ENCODE measurements at regions of chr1 and their contacts with region 1.

Region 1: GRCh38 chr1:213015099-213016050 is at the start of gene ANGEL2:
- DNase-seq: peak; percentile 90 to 99 (median 95)
- ATAC-seq: peak; percentile 97
- H3K4me3 ChIP-seq: peak within 1 kb of the TSS; percentile 90 to 96
- H3K4me3 Mint-ChIP-seq: peak within 1 kb of the TSS; percentile 100
- H3K27ac ChIP-seq: peak within 1 kb of the TSS; percentile 90 to 92
- H3K27ac Mint-ChIP-seq: peak within 1 kb of the TSS; percentile 100
- H3K4me1 ChIP-seq: peaks cover 19% of the 10 kb centered on the region
- H3K4me1 Mint-ChIP-seq: peaks cover 40% of the 10 kb centered on the region
- H3K27me3 ChIP-seq: no peaks in the 10 kb centered on the region
- H3K27me3 Mint-ChIP-seq: no peaks in the 10 kb centered on the region
- CTCF ChIP-seq: no peak
- total RNA-seq, gene ANGEL2: 47.4 to 52.5 TPM

Region 2: DNA sequence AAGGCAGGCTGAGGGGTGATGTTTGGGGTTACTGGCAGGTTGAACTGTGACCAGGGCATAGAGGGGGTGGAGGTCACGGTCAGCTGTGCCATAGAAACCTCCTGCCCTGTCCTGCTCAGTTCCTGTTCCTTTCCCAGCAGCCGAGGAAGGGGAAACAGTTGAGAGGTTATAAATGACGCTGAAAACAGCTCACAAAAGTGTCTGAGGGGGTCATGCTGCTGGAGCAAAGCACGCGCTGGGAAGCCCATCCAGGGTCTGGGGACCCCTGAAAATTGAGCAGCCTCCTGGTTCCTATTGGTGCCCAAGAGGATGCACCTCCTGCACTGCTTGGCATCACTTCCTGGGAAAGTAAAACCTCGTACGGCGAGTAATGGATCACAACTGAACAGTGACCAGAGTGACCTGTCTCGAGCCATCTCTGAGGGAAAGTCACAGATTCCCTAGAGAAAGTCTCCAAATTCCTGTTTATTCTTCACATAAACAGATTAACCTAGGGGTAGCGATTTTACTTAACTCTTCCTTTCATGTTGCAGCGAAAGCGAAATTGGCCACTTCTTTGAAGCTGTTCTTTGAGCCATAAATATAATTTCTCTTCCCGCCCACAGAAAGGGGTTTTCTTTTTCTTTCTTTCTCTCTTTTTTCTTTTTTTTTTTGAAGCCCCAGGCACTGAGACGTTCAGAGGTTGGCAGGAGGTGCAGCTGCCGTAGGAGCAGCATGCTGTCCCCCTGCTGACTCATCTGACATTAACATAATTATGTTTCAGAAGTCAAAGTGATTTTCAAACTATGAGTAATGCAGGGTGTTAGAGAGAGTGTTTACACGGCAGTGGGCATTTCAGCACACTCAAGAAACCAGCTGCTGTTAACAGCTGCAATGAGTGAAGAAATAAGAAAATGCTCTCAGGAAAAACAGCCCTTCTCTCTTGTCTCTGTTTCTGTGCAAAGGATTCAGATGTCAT is 448.6 kb before region 1 on chr1:
- CTCF ChIA-PET with region 1: no interaction called
- POLR2A ChIA-PET with region 1: no interaction called
- intact Hi-C with region 1: loop called (anchors 1 to 5 kb)
- DNase-seq: peak in 8 of 9 experiments; percentile 32 to 79 (median 59)
- ATAC-seq: peak; percentile 99
- H3K4me3 ChIP-seq: peak overlapping the region; percentile 59 to 67
- H3K4me3 Mint-ChIP-seq: peak overlapping the region; percentile 86
- H3K27ac ChIP-seq: peak overlapping the region; percentile 30 to 38
- H3K27ac Mint-ChIP-seq: peak overlapping the region; percentile 62
- H3K4me1 ChIP-seq: peaks cover 7% of the 10 kb centered on the region
- H3K4me1 Mint-ChIP-seq: peaks cover 16% of the 10 kb centered on the region
- H3K27me3 ChIP-seq: no peaks in the 10 kb centered on the region
- H3K27me3 Mint-ChIP-seq: no peaks in the 10 kb centered on the region
- CTCF ChIP-seq: no peak

Region 3: GRCh38 chr1:213051127-213051880 is 35.9 kb after region 1 on chr1 and contains the start of gene RPS6KC1:
- CTCF ChIA-PET with region 1: interaction called, 3 read pairs
- POLR2A ChIA-PET with region 1: interaction called, 4 read pairs
- intact Hi-C with region 1: loop called (anchors 1 kb)
- DNase-seq: peak; percentile 53 to 90 (median 85)
- ATAC-seq: peak; percentile 94
- H3K4me3 ChIP-seq: peak within 1 kb of the TSS; percentile 95 to 99
- H3K4me3 Mint-ChIP-seq: peak within 1 kb of the TSS; percentile 93
- H3K27ac ChIP-seq: peak within 1 kb of the TSS; percentile 54 to 86
- H3K27ac Mint-ChIP-seq: peak within 1 kb of the TSS; percentile 95
- H3K4me1 ChIP-seq: peaks cover 15% of the 10 kb centered on the region
- H3K4me1 Mint-ChIP-seq: peaks cover 35% of the 10 kb centered on the region
- H3K27me3 ChIP-seq: peaks cover 0 to 4% of the 10 kb centered on the region in 2 experiments
- H3K27me3 Mint-ChIP-seq: peaks cover 15% of the 10 kb centered on the region
- CTCF ChIP-seq: no peak
- total RNA-seq, gene RPS6KC1: 5.3 to 5.6 TPM

Measured in CD8-positive, alpha-beta T cell (primary cell).